Naive thymus-derived CD4-positive, alpha-beta T cell (primary cell): ENCODE measurements at regions of chr5 and their contacts with region 1.

Region 1: GRCh38 chr5:54229041-54229780 is 81.2 kb downstream of the ARL15 start:
- DNase-seq: peak; percentile 32 to 70 (median 62)
- ATAC-seq: peak; percentile 89
- H3K4me3 ChIP-seq: no peak overlapping the region
- H3K4me3 Mint-ChIP-seq: peak overlapping the region in 1 of 10 donors; percentile 14
- H3K27ac ChIP-seq: no peak overlapping the region
- H3K27ac Mint-ChIP-seq: peak overlapping the region in 1 of 9 donors; percentile 10
- H3K4me1 ChIP-seq: peaks cover 0 to 4% of the 10 kb centered on the region in 2 donors
- H3K4me1 Mint-ChIP-seq: peaks cover 3 to 39% (median 18%) of the 10 kb centered on the region in 7 donors
- H3K27me3 ChIP-seq: no peaks in the 10 kb centered on the region
- H3K27me3 Mint-ChIP-seq: peaks cover 0 to 8% (median 0%) of the 10 kb centered on the region in 5 donors

Region 2: GRCh38 chr5:53123702-53124101 is 1105.5 kb before region 1 on chr5:
- CTCF ChIA-PET with region 1: no interaction called
- POLR2A ChIA-PET with region 1: no interaction called
- intact Hi-C with region 1: loop called in 1 of 2 experiments (anchors 5 kb)
- DNase-seq: no peak
- ATAC-seq: no peak
- H3K4me3 ChIP-seq: no peak overlapping the region
- H3K4me3 Mint-ChIP-seq: no peak overlapping the region
- H3K27ac ChIP-seq: no peak overlapping the region
- H3K27ac Mint-ChIP-seq: no peak overlapping the region
- H3K4me1 ChIP-seq: no peaks in the 10 kb centered on the region
- H3K4me1 Mint-ChIP-seq: peaks cover 0 to 5% (median 0%) of the 10 kb centered on the region in 7 donors
- H3K27me3 ChIP-seq: no peaks in the 10 kb centered on the region
- H3K27me3 Mint-ChIP-seq: peaks cover 0 to 5% (median 0%) of the 10 kb centered on the region in 5 donors

Region 3: GRCh38 chr5:53560506-53561191 is 668.6 kb before region 1 on chr5 and contains the start of gene NDUFS4:
- CTCF ChIA-PET with region 1: no interaction called
- POLR2A ChIA-PET with region 1: no interaction called
- intact Hi-C with region 1: loop called in 1 of 2 experiments (anchors 10 kb)
- DNase-seq: peak; percentile 44 to 76 (median 68)
- ATAC-seq: peak; percentile 94
- H3K4me3 ChIP-seq: peak within 1 kb of the TSS; percentile 54
- H3K4me3 Mint-ChIP-seq: peak within 1 kb of the TSS; percentile 97 to 100 (median 98)
- H3K27ac ChIP-seq: peak within 1 kb of the TSS; percentile 74
- H3K27ac Mint-ChIP-seq: peak within 1 kb of the TSS; percentile 91 to 99 (median 95)
- H3K4me1 ChIP-seq: peaks cover 0 to 18% of the 10 kb centered on the region in 2 donors
- H3K4me1 Mint-ChIP-seq: peaks cover 20 to 56% (median 50%) of the 10 kb centered on the region in 7 donors
- H3K27me3 ChIP-seq: no peaks in the 10 kb centered on the region
- H3K27me3 Mint-ChIP-seq: peaks cover 13 to 35% (median 28%) of the 10 kb centered on the region in 5 donors
- total RNA-seq, gene NDUFS4: 23.4 to 54.8 (median 35.6) TPM